ENCODE measurements at regions of chr1 and their contacts with region 1.

Region 1: GRCh38 chr1:40980453-40981121 is 1.1 kb downstream of the CTPS1 start:
- DNase-seq: no peak
- H3K4me3 ChIP-seq: peak overlapping the region; percentile 34 to 60
- H3K27ac ChIP-seq: peak overlapping the region; percentile 90 to 92
- H3K4me1 ChIP-seq: no peaks in the 10 kb centered on the region
- H3K27me3 ChIP-seq: no peaks in the 10 kb centered on the region
- CTCF ChIP-seq: no peak
- POLR2A ChIP-seq: no peak

Region 2: DNA sequence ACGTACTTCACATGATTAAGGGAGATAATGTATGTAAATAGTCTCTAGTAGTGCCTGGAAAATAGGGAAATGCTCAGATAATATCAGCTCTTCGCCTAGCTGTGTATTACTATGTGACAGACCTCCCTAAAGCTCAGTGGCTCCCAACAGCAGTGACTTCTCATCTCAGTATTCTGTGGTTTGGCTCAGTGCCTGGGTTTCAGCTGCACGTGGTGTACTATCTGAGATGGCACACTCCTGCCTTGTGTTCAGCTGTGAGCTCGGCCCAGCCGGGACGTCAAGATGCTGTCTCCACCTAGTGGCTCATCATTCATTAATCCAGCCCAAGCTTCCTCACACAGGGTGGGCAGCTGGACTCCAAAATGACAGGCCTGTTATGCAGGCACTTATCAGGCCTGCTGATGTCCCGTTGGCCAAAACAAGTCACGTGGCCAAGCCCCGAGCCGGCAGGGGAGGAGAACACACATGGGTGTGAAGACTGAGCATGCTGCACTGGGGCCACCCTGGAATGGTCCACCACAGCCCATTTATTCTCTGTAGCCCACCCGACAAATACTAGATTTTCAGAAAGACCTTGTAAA is 23.1 kb after region 1 on chr1:
- intact Hi-C with region 1: loop called (anchors 1 kb)
- DNase-seq: peak; percentile 98
- H3K4me3 ChIP-seq: no peak overlapping the region
- H3K27ac ChIP-seq: peak overlapping the region; percentile 35 to 42
- H3K4me1 ChIP-seq: peaks cover 4% of the 10 kb centered on the region
- H3K27me3 ChIP-seq: no peaks in the 10 kb centered on the region
- CTCF ChIP-seq: peak in 3 of 4 experiments; percentile 72 to 81 (median 76)
- POLR2A ChIP-seq: no peak